ENCODE measurements at regions of chr2 and their contacts with region 1.

Region 1: GRCh38 chr2:203782262-203782976 is 76.0 kb downstream of the CD28 start:
- DNase-seq: no peak
- H3K4me3 ChIP-seq: no peak overlapping the region
- H3K27me3 ChIP-seq: no peaks in the 10 kb centered on the region
- CTCF ChIP-seq: peak; percentile 82

Region 2: GRCh38 chr2:203427061-203427460 is 355.4 kb before region 1 on chr2:
- CTCF ChIA-PET with region 1: no interaction called
- POLR2A ChIA-PET with region 1: no interaction called
- DNase-seq: peak; percentile 39
- H3K4me3 ChIP-seq: no peak overlapping the region
- H3K27me3 ChIP-seq: no peaks in the 10 kb centered on the region
- CTCF ChIP-seq: no peak

Region 3: GRCh38 chr2:203808046-203808750 is 25.8 kb after region 1 on chr2:
- CTCF ChIA-PET with region 1: interaction called, 11 read pairs
- POLR2A ChIA-PET with region 1: no interaction called
- DNase-seq: no peak
- H3K4me3 ChIP-seq: no peak overlapping the region
- H3K27me3 ChIP-seq: no peaks in the 10 kb centered on the region
- CTCF ChIP-seq: no peak

Measured in BJ (cell line).